Prostate gland (tissue), 2 donors: ENCODE measurements at regions of chr12 and their contacts with region 1.

Region 1: GRCh38 chr12:113310489-113310888 is 24.4 kb downstream of the SLC8B1 start:
- DNase-seq: no peak
- H3K4me3 ChIP-seq: no peak overlapping the region
- H3K27ac ChIP-seq: no peak overlapping the region
- H3K4me1 ChIP-seq: no peaks in the 10 kb centered on the region
- H3K27me3 ChIP-seq: no peaks in the 10 kb centered on the region
- CTCF ChIP-seq: no peak
- POLR2A ChIP-seq: no peak

Region 2: GRCh38 chr12:113196996-113197395 is 113.5 kb before region 1 on chr12:
- intact Hi-C with region 1: loop called (anchors 10 kb)
- DNase-seq: peak; percentile 63
- H3K4me3 ChIP-seq: no peak overlapping the region
- H3K27ac ChIP-seq: no peak overlapping the region
- H3K4me1 ChIP-seq: no peaks in the 10 kb centered on the region
- H3K27me3 ChIP-seq: no peaks in the 10 kb centered on the region
- CTCF ChIP-seq: peak; percentile 24 to 65 (median 50)
- POLR2A ChIP-seq: no peak

Region 3: DNA sequence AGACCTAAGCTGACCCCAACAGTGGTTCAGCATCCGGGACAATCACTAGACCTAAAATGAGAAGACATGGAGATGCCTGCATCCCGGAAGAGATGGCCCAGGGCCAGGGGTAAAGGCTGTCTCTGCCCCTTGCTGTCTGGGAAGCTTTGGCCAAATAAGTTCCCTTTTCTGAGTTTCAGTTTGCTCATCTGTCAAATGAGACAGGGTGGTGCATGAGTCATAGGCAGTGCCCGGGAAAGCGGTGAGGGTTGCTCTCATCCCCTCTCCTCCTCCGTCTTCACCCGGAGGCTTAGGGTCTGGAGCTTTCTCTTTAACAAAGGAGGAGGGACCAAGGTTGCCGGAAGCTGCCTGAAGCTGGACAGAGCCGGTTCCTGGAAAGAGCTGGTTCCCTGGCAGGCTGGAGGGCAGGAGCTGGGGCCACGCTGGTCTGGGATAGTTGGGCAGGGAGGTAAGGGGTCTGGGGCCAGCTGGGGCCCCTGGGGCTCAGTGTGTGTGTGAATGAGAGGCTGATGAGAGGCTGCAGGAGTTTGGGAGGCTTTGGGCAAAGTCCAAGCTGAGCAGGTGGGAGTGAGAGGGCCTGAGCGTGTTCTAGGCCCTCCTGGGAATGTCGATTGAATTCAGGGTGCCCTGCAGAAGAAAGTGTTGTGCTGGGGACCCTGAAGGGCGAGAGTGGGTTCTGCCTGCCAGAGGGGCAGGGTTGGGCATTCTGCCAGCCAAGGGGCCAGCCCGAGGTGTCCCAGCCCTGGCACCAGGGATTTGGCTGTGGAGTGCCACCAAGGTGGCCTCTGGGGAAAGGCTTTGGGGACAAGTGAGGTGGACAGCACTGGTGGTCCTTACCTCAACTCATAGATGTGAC is 111.8 kb after region 1 on chr12 and contains the start of gene SDSL:
- intact Hi-C with region 1: loop called (anchors 10 kb)
- DNase-seq: peak; percentile 49
- H3K4me3 ChIP-seq: peak within 1 kb of the TSS; percentile 26 to 36
- H3K27ac ChIP-seq: peak within 1 kb of the TSS; percentile 33 to 50
- H3K4me1 ChIP-seq: no peaks in the 10 kb centered on the region
- H3K27me3 ChIP-seq: no peaks in the 10 kb centered on the region
- CTCF ChIP-seq: no peak
- POLR2A ChIP-seq: peak; percentile 36
- total RNA-seq, gene SDSL: 6.2 to 8.5 TPM